GM12878 (cell line): ENCODE measurements at regions of chr6 and their contacts with region 1.

Region 1: DNA sequence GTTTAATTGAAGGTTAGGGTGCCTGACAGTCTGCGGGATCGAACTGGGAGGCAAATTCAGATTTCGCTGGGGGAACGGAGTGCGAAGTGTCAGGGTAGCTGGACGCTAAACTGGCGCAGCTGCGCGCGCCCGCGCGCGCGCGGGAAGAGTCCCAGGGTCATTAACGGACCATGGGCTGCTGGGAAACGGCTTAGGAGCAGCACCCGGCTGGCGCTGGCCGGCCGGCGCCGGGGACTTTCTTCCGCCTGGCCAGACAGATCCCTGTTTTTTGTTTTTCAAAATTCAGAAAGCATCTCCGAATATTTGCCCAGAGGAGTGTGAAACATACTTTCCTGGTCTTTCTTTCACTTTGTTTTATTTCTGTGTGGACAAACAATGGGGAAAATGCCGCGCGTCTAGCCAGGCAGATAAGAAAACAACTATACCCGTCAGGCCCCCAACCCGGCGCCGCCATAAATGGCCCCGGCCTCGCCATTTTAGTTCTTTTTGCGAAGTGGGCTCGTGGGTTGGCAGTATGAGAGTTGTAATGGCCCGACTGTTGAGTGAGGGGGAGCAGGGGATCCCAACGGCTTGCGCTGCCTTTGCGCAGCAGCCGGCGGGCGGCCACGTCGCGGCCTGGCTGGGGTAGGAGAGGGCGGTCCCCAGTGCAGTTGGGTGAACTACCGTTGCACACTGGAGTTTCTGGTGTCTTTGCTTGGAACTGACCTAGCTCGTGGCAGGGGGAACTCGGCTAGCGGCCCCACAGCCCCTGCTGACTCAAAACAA is 7.1 kb downstream of the HSPA1B start:
- DNase-seq: peak; percentile 50
- ATAC-seq: peak; percentile 72
- H3K4me3 ChIP-seq: peak overlapping the region; percentile 82
- H3K27ac ChIP-seq: peak overlapping the region; percentile 96
- H3K4me1 ChIP-seq: peaks cover 20% of the 10 kb centered on the region
- H3K27me3 ChIP-seq: no peaks in the 10 kb centered on the region
- CTCF ChIP-seq: no peak
- EP300 ChIP-seq: no peak; a peak in 2 of 4 replicates
- POLR2A ChIP-seq: peak; percentile 99
- RAD21 ChIP-seq: no peak

Region 2: DNA sequence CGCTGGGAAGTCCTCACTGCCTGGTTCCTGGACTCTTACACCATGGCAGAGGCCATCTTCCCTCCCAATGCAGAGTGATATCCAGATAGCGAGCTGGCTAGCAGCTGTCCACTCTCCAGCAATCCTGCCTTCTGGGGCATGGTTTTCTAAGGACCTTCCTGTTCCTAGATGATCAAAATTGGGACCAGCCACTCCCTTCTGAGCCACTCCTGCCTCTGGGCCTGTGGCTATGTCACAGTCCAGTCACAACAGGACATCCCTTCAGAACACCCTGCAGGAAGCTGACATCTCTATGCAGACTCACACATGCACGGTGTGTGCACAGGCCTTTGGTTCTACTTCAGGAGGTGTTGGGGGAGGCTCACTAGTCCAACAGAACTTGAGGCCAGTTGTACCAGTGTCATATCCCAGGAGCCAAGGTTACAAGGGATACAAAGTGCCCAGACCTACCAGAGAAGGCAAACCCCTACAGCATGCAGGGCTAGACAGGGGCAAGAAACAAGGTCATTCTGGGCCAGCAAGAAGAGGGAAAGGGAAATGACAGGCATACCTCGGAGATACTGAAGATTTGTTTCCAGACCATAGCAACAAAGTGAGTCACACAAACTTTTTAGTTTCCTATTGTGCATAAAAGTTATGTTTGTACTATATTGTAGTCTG is 308.6 kb before region 1 on chr6:
- CTCF ChIA-PET with region 1: no interaction called
- POLR2A ChIA-PET with region 1: no interaction called
- RAD21 ChIA-PET with region 1: no interaction called
- SMC1A ChIA-PET with region 1: no interaction called
- in situ Hi-C with region 1: no loop called
- intact Hi-C with region 1: no loop called
- DNase-seq: no peak
- ATAC-seq: no peak
- H3K4me3 ChIP-seq: no peak overlapping the region
- H3K27ac ChIP-seq: no peak overlapping the region
- H3K4me1 ChIP-seq: no peaks in the 10 kb centered on the region
- H3K27me3 ChIP-seq: no peaks in the 10 kb centered on the region
- CTCF ChIP-seq: no peak
- EP300 ChIP-seq: no peak
- POLR2A ChIP-seq: no peak
- RAD21 ChIP-seq: no peak

Region 3: GRCh38 chr6:31541658-31542521 is 292.7 kb before region 1 on chr6 and contains the start of gene DDX39B:
- CTCF ChIA-PET with region 1: interaction called, 3 read pairs
- POLR2A ChIA-PET with region 1: interaction called, 3 read pairs
- RAD21 ChIA-PET with region 1: interaction called, 5 read pairs
- SMC1A ChIA-PET with region 1: interaction called, 6 read pairs
- in situ Hi-C with region 1: loop called (anchors 10 kb)
- intact Hi-C with region 1: loop called (anchors 1 kb)
- DNase-seq: peak; percentile 93
- ATAC-seq: peak; percentile 81
- H3K4me3 ChIP-seq: peak within 1 kb of the TSS; percentile 94
- H3K27ac ChIP-seq: peak within 1 kb of the TSS; percentile 97
- H3K4me1 ChIP-seq: no peaks in the 10 kb centered on the region
- H3K27me3 ChIP-seq: no peaks in the 10 kb centered on the region
- CTCF ChIP-seq: no peak
- EP300 ChIP-seq: no peak
- POLR2A ChIP-seq: peak; percentile 96
- RAD21 ChIP-seq: no peak
- polyA plus RNA-seq, gene DDX39B: 271 to 277 TPM

Region 4: GRCh38 chr6:31692353-31692752 is 142.3 kb before region 1 on chr6:
- CTCF ChIA-PET with region 1: interaction called, 5 read pairs
- POLR2A ChIA-PET with region 1: interaction called, 11 read pairs
- RAD21 ChIA-PET with region 1: no interaction called
- SMC1A ChIA-PET with region 1: interaction called, 3 read pairs
- in situ Hi-C with region 1: no loop called
- intact Hi-C with region 1: no loop called
- DNase-seq: no peak
- ATAC-seq: no peak
- H3K4me3 ChIP-seq: no peak overlapping the region
- H3K27ac ChIP-seq: no peak overlapping the region
- H3K4me1 ChIP-seq: no peaks in the 10 kb centered on the region
- H3K27me3 ChIP-seq: no peaks in the 10 kb centered on the region
- CTCF ChIP-seq: no peak
- EP300 ChIP-seq: no peak
- POLR2A ChIP-seq: no peak
- RAD21 ChIP-seq: no peak

Region 5: GRCh38 chr6:31795616-31796298 is 38.9 kb before region 1 on chr6 and contains the start of gene VARS1:
- CTCF ChIA-PET with region 1: interaction called, 10 read pairs
- POLR2A ChIA-PET with region 1: interaction called, 11 read pairs
- RAD21 ChIA-PET with region 1: interaction called, 16 read pairs
- SMC1A ChIA-PET with region 1: interaction called, 11 read pairs
- in situ Hi-C with region 1: no loop called
- intact Hi-C with region 1: loop called (anchors 5 kb)
- DNase-seq: peak; percentile 62
- ATAC-seq: peak; percentile 88
- H3K4me3 ChIP-seq: peak within 1 kb of the TSS; percentile 81
- H3K27ac ChIP-seq: peak within 1 kb of the TSS; percentile 95
- H3K4me1 ChIP-seq: peaks cover 4% of the 10 kb centered on the region
- H3K27me3 ChIP-seq: no peaks in the 10 kb centered on the region
- CTCF ChIP-seq: peak; percentile 84 to 98 (median 88); a peak in 5 of 6 replicates
- EP300 ChIP-seq: no peak
- POLR2A ChIP-seq: peak; percentile 76
- RAD21 ChIP-seq: peak; percentile 53
- polyA plus RNA-seq, gene VARS1: 1.2 to 5.7 TPM

Region 6: DNA sequence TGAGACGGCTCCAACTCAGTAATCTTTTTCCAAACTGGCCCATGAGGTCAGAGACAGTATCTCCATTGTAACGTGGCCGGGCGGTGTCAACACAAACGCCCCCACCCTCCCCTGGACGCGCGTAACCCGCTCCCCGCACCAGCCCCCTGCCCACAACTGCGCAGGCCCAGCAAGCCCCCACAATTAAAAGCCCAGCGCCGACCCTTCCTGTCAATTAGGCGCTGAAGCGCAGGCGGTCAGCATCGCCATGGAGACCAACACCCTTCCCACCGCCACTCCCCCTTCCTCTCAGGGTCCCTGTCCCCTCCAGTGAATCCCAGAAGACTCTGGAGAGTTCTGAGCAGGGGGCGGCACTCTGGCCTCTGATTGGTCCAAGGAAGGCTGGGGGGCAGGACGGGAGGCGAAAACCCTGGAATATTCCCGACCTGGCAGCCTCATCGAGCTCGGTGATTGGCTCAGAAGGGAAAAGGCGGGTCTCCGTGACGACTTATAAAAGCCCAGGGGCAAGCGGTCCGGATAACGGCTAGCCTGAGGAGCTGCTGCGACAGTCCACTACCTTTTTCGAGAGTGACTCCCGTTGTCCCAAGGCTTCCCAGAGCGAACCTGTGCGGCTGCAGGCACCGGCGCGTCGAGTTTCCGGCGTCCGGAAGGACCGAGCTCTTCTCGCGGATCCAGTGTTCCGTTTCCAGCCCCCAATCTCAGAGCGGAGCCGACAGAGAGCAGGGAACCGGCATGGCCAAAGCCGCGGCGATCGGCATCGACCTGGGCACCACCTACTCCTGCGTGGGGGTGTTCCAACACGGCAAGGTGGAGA is 19.4 kb before region 1 on chr6 and contains the starts of genes HSPA1A and HSPA1L:
- CTCF ChIA-PET with region 1: interaction called, 3 read pairs
- POLR2A ChIA-PET with region 1: interaction called, 31 read pairs
- RAD21 ChIA-PET with region 1: interaction called, 19 read pairs
- SMC1A ChIA-PET with region 1: interaction called, 6 read pairs
- in situ Hi-C with region 1: no loop called
- intact Hi-C with region 1: no loop called
- DNase-seq: no peak
- ATAC-seq: peak; percentile 58
- H3K4me3 ChIP-seq: peak within 1 kb of the TSS; percentile 94
- H3K27ac ChIP-seq: peak within 1 kb of the TSS; percentile 58
- H3K4me1 ChIP-seq: peaks cover 29% of the 10 kb centered on the region
- H3K27me3 ChIP-seq: no peaks in the 10 kb centered on the region
- CTCF ChIP-seq: no peak
- EP300 ChIP-seq: 0 out of 4 replicates have a peak, but pooled peaks of 1 of the 2 experiments have one; percentile 30
- POLR2A ChIP-seq: peak; percentile 81
- RAD21 ChIP-seq: no peak
- polyA plus RNA-seq, gene HSPA1A: 0.29 to 1.3 TPM
- polyA plus RNA-seq, gene HSPA1L: 0.69 TPM

Region 7: DNA sequence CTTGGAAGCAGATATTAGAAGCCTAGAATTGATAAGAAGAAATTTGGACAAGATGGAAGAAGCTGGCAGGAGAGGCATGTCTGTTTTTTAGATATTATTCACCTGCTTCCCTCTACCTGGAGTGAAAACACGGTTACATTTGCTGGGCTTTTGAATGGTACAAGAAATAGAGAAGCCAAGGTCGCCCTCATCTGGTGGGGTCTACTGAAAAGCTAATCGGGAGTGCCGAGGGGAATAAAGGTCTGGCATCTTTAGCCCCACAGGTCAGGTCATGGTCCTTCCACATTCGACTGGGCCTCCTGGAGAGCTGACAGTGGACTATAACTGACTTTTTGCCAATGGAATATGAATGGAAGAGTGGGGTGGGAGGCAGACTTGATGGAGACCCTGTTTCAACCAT is 88.3 kb after region 1 on chr6:
- CTCF ChIA-PET with region 1: interaction called, 22 read pairs
- POLR2A ChIA-PET with region 1: no interaction called
- RAD21 ChIA-PET with region 1: interaction called, 20 read pairs
- SMC1A ChIA-PET with region 1: interaction called, 7 read pairs
- in situ Hi-C with region 1: no loop called
- intact Hi-C with region 1: no loop called
- DNase-seq: no peak
- ATAC-seq: peak; percentile 90
- H3K4me3 ChIP-seq: no peak overlapping the region
- H3K27ac ChIP-seq: no peak overlapping the region
- H3K4me1 ChIP-seq: no peaks in the 10 kb centered on the region
- H3K27me3 ChIP-seq: no peaks in the 10 kb centered on the region
- CTCF ChIP-seq: peak; percentile 57 to 65 (median 61)
- EP300 ChIP-seq: no peak
- POLR2A ChIP-seq: no peak
- RAD21 ChIP-seq: peak; percentile 79